Heart left ventricle (tissue), 16 donors: ENCODE measurements at regions of chr3 and their contacts with region 1.

Region 1: GRCh38 chr3:179732661-179733348 is 80.0 kb downstream of the USP13 start:
- DNase-seq: peak in 4 of 5 donors; percentile 60 to 86 (median 74)
- ATAC-seq: peak; percentile 82 to 93 (median 91)
- H3K4me3 ChIP-seq: no peak overlapping the region
- H3K27ac ChIP-seq: peak overlapping the region; percentile 55 to 89 (median 76)
- H3K4me1 ChIP-seq: peaks cover 0 to 43% (median 13%) of the 10 kb centered on the region in 12 donors
- H3K27me3 ChIP-seq: no peaks in the 10 kb centered on the region
- CTCF ChIP-seq: no peak
- POLR2A ChIP-seq: no peak

Region 2: GRCh38 chr3:179658606-179659005 is 74.2 kb before region 1 on chr3:
- intact Hi-C with region 1: loop called in 5 of 10 experiments (anchors 2 to 10 kb)
- DNase-seq: no peak
- ATAC-seq: peak in 2 of 4 donors; percentile 21 to 58
- H3K4me3 ChIP-seq: no peak overlapping the region
- H3K27ac ChIP-seq: peak overlapping the region in 6 of 12 donors; percentile 6 to 68 (median 37)
- H3K4me1 ChIP-seq: peaks cover 3 to 75% (median 28%) of the 10 kb centered on the region in 12 donors
- H3K27me3 ChIP-seq: no peaks in the 10 kb centered on the region
- CTCF ChIP-seq: no peak
- POLR2A ChIP-seq: no peak

Region 3: DNA sequence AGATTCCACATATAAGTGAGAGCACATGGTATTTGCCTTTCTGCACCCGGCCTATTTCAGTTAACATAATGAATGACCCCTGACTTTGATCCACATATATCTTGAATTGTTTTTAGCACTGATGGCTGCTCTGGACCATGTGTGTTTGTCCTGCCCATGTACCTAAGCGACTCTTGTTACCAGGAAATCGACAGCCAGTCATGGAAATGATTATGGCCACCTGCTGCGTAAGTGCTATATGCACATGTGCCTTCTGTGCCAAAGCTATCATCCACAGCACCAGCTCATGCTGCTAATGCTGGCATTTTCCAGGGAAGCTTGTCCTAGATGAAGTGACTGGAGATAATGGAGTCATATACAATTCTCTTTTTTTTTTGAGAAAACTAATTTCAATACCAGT is 200.3 kb after region 1 on chr3:
- intact Hi-C with region 1: no loop called
- DNase-seq: no peak
- ATAC-seq: no peak
- H3K4me3 ChIP-seq: no peak overlapping the region
- H3K27ac ChIP-seq: no peak overlapping the region
- H3K4me1 ChIP-seq: no peaks in the 10 kb centered on the region
- H3K27me3 ChIP-seq: no peaks in the 10 kb centered on the region
- CTCF ChIP-seq: no peak
- POLR2A ChIP-seq: no peak